Activated CD4-positive, alpha-beta memory T cell treated with anti-CD3 and anti-CD28 coated beads for 36 hours (primary cell): ENCODE measurements at regions of chr1 and their contacts with region 1.

Region 1: DNA sequence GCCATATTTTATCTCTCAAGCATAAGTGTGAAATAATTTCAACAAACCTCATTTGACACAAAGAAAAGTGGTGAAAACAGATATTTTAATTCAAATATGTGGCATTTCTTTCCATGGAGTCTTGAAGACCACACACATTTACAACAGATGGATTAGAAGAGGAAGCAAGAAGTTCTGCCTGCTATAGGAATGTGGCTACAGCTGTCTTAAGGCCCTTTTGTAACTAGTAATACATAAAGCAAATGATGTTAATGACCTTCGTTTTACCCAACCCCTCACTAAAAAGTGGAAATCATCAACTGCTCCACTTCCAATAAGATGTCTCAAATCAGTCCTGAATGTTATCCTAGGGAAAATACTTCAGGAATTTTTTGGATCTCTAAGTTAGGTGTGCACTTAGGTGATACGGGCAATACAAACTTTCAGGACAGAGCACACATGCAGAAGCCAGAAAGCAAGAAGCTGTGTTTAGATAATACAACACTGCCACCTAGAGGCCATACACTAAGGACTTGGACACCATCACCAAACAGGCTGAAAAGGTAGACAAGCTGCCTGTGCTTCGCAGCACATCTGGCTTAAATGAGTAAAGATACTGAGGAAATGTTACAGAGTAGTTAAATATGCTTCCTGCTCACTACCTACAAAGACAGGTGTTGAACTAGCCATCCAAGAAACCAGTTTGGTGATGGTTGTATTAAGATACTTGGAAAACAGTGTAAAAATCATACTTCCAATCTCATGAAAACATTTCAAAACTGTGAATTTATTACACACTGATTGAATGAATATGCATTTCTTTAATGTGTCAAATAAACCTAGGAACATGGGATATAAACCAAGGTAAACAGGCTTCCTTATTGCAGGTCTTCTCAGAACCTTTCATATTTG is 24.4 kb downstream of the RRAGC start:
- DNase-seq: peak; percentile 40
- H3K4me3 Mint-ChIP-seq: no peak overlapping the region
- H3K27ac Mint-ChIP-seq: no peak overlapping the region
- H3K4me1 Mint-ChIP-seq: no peaks in the 10 kb centered on the region
- H3K27me3 Mint-ChIP-seq: peaks cover 7% of the 10 kb centered on the region

Region 2: DNA sequence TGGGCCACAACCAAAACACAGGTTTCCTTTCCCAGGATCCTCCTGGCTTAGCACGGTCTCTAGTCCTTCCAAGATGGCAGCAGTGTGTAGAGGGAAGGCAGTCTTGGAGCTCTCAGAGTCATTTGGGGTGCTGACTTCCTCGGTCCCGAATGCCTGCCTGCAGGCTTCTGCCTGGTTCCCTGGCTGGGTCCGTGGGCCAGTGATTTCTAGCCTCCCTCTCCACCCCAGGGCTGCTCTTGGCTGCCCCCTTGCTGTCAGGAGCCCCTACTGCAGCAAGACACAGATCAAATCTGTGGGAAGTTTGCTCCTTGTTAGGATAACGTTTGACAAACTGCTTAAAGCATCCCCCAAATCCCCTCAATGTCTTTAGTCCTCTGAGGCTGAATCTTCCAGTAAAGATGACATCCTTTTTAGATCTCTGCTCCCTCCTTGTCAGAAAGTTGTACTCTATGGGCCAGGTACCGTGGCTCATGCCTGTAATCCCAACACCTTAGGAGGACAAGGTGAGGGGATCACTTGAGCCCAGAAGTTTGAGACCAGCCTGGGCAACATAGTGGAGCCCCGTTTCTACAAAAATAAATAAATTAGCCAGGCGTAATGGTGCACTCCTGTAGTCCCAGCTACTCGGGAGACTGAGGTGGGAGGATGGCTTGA is 248.1 kb before region 1 on chr1:
- CTCF ChIA-PET with region 1: no interaction called
- POLR2A ChIA-PET with region 1: no interaction called
- intact Hi-C with region 1: loop called (anchors 10 kb)
- DNase-seq: peak; percentile 68
- H3K4me3 Mint-ChIP-seq: no peak overlapping the region
- H3K27ac Mint-ChIP-seq: no peak overlapping the region
- H3K4me1 Mint-ChIP-seq: peaks cover 4% of the 10 kb centered on the region
- H3K27me3 Mint-ChIP-seq: peaks cover 3% of the 10 kb centered on the region

Region 3: DNA sequence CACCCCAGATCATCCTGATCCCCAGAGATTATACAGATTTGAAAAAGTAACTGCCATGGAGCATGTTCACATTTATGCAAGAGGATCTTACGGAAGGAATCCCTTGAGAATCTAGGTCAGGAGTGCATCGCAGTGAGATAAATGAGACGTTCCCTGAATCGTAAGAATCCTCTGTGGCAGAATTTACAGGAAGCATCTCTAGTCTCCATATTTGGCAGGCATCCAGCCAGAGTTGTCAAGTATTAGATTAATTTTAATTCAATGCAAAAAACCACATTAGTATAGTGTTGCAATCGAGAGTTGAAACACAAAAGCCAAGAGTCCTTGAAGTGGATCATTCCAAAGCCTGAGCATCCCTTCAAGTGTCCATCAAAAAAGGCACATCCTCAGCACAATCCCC is 76.4 kb before region 1 on chr1:
- CTCF ChIA-PET with region 1: no interaction called
- POLR2A ChIA-PET with region 1: no interaction called
- intact Hi-C with region 1: no loop called
- DNase-seq: no peak
- H3K4me3 Mint-ChIP-seq: no peak overlapping the region
- H3K27ac Mint-ChIP-seq: no peak overlapping the region
- H3K4me1 Mint-ChIP-seq: no peaks in the 10 kb centered on the region
- H3K27me3 Mint-ChIP-seq: peaks cover 28% of the 10 kb centered on the region

Region 4: DNA sequence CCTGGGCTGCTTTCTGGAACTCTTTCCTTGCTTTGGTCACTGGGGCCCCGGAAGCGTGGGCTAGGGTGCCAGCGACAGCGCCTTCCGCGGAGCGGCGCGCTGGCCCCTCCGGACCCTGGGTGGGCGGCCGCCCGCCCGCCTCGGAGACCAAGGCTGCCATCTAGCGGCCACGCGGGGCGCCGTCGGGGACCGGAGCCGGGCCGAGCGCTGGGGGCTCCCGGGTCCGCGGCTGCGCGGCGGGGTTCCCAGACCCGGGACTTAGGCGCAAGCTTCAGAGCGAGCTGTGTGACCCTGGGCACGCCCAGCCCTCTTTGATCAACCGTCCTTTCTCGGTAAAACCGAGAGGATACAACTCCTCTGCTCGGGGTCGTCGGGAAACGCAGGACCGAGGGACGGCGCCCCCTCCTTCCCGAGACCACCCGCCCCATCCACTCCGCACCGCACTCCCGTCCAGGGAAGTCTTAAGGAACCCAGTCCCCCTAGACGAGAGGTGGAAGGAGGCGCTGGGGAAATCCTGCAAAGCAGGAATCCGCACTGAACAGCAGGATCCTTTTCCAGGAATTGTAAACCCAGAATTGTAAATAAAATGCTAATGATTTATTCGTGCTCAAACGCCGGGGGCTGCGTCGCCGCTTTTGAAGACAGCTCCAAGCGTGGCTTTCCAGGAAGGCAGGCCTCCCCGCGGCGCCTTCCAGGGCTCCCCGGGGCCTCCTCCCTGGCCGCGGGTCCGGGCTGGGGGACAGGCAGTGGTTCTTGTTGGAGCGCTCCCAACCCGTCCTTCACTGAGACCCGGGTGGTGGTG is 16.8 kb before region 1 on chr1:
- CTCF ChIA-PET with region 1: interaction called, 13 read pairs
- POLR2A ChIA-PET with region 1: no interaction called
- intact Hi-C with region 1: no loop called
- DNase-seq: peak; percentile 44
- H3K4me3 Mint-ChIP-seq: no peak overlapping the region
- H3K27ac Mint-ChIP-seq: no peak overlapping the region
- H3K4me1 Mint-ChIP-seq: peaks cover 2% of the 10 kb centered on the region
- H3K27me3 Mint-ChIP-seq: peaks cover 62% of the 10 kb centered on the region

Region 5: DNA sequence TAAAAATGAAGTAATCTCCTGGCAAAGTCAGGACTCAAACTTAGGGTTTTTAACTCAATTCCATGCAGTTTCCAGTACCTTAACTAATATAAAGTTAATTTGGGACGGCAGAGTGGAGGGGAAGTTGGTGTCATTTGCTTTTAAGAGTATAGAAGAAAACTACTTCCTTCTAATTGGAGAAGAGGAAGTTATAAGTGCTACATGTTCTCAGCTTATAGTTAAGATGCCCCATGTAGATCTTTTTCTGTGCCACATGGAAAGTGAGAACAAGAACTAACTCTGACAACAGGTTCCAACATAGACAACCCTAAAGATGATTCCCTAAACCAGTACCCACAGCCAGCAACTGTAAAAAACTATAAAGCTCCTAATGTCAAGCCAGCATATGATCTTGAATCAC is 12.9 kb after region 1 on chr1:
- CTCF ChIA-PET with region 1: interaction called, 23 read pairs
- POLR2A ChIA-PET with region 1: no interaction called
- intact Hi-C with region 1: no loop called
- DNase-seq: no peak
- H3K4me3 Mint-ChIP-seq: no peak overlapping the region
- H3K27ac Mint-ChIP-seq: no peak overlapping the region
- H3K4me1 Mint-ChIP-seq: peaks cover 31% of the 10 kb centered on the region
- H3K27me3 Mint-ChIP-seq: no peaks in the 10 kb centered on the region

Region 6: DNA sequence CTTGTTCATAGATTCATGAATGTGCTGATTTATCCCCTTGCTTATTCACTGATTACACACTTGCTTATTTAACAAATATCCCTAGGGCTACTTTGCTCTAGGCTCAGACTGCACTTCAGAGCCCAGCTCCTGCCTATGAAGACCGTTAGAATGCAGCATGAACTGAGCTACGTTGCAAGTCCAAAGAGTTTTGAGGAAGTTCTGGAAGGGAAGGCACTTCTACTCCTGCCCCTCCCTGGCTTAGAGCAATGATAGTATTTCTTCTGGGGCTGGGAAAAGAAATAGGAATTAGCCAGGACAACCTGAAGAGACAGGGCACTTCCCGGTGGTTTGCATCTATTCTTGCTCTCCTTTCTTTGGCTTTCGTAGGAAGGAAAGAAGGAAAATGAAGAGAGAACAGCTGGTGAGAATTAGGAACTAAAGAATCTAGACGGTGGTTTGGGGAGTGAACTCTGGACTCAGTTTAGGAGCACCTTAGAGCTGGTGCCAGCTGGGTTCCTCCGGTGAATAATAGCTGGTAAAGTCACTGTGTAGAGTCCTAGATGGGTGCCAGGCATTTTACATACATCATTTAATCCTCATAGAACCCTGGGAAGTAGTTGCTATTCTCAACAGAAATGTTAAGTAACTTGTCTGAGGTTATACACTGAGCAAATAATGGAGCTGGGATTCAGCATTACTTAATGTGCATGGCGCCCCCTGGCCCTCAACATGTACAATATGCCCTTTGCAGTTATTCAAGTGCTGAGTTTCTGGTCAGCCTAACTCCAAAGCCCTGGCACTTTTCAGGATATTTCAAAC is 256.9 kb after region 1 on chr1:
- CTCF ChIA-PET with region 1: interaction called, 9 read pairs
- POLR2A ChIA-PET with region 1: no interaction called
- intact Hi-C with region 1: loop called (anchors 1 kb)
- DNase-seq: peak; percentile 77
- H3K4me3 Mint-ChIP-seq: no peak overlapping the region
- H3K27ac Mint-ChIP-seq: no peak overlapping the region
- H3K4me1 Mint-ChIP-seq: peaks cover 6% of the 10 kb centered on the region
- H3K27me3 Mint-ChIP-seq: peaks cover 3% of the 10 kb centered on the region